ENCODE measurements at regions of chr20 and their contacts with region 1.

Region 1: DNA sequence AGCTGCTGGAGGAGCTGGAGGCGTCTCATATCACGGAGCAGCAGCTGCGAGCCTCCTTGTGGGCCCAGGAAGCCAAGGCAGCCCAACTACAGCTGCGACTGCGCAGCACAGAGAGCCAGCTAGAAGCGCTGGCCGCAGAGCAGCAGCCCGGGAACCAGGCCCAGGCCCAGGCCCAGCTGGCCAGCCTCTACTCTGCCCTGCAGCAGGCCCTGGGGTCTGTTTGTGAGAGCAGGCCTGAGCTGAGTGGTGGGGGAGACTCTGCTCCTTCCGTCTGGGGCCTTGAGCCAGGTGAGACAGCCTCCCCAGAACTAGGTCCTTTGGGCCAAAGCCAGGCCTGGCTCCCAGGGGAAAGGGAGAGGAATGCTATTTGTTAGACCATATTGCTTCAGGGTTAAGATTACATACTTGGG is 31.7 kb downstream of the C20orf173 start:
- DNase-seq: peak; percentile 82 to 93
- ATAC-seq: peak; percentile 97 to 98 (median 98)
- H3K4me3 ChIP-seq: no peak overlapping the region
- H3K27ac ChIP-seq: peak overlapping the region; percentile 85
- H3K4me1 ChIP-seq: peaks cover 30% of the 10 kb centered on the region
- H3K27me3 ChIP-seq: no peaks in the 10 kb centered on the region
- CTCF ChIP-seq: peak; percentile 38

Region 2: GRCh38 chr20:35432430-35432735 is 65.4 kb before region 1 on chr20:
- intact Hi-C with region 1: no loop called
- DNase-seq: no peak
- ATAC-seq: no peak
- H3K4me3 ChIP-seq: no peak overlapping the region
- H3K27ac ChIP-seq: no peak overlapping the region
- H3K4me1 ChIP-seq: no peaks in the 10 kb centered on the region
- H3K27me3 ChIP-seq: no peaks in the 10 kb centered on the region
- CTCF ChIP-seq: no peak

Region 3: GRCh38 chr20:35463455-35464300 is 34.1 kb before region 1 on chr20:
- intact Hi-C with region 1: loop called in 1 of 2 experiments (anchors 5 kb)
- DNase-seq: no peak
- ATAC-seq: peak; percentile 48 to 69 (median 58)
- H3K4me3 ChIP-seq: no peak overlapping the region
- H3K27ac ChIP-seq: no peak overlapping the region
- H3K4me1 ChIP-seq: peaks cover 15% of the 10 kb centered on the region
- H3K27me3 ChIP-seq: no peaks in the 10 kb centered on the region
- CTCF ChIP-seq: peak; percentile 78

Measured in psoas muscle (tissue), 8 donors.